PC-9 (cell line): ENCODE measurements at regions of chr14 and their contacts with region 1.

Region 1: GRCh38 chr14:55122509-55122953 is 6.5 kb upstream of the LGALS3 start:
- DNase-seq: peak; percentile 79 to 86
- H3K4me3 ChIP-seq: 0 out of 2 replicates have a peak overlapping the region, but pooled peaks have one; percentile 12
- H3K27ac ChIP-seq: peak overlapping the region; percentile 76
- H3K4me1 ChIP-seq: peaks cover 82% of the 10 kb centered on the region
- H3K27me3 ChIP-seq: no peaks in the 10 kb centered on the region
- CTCF ChIP-seq: no peak

Region 2: DNA sequence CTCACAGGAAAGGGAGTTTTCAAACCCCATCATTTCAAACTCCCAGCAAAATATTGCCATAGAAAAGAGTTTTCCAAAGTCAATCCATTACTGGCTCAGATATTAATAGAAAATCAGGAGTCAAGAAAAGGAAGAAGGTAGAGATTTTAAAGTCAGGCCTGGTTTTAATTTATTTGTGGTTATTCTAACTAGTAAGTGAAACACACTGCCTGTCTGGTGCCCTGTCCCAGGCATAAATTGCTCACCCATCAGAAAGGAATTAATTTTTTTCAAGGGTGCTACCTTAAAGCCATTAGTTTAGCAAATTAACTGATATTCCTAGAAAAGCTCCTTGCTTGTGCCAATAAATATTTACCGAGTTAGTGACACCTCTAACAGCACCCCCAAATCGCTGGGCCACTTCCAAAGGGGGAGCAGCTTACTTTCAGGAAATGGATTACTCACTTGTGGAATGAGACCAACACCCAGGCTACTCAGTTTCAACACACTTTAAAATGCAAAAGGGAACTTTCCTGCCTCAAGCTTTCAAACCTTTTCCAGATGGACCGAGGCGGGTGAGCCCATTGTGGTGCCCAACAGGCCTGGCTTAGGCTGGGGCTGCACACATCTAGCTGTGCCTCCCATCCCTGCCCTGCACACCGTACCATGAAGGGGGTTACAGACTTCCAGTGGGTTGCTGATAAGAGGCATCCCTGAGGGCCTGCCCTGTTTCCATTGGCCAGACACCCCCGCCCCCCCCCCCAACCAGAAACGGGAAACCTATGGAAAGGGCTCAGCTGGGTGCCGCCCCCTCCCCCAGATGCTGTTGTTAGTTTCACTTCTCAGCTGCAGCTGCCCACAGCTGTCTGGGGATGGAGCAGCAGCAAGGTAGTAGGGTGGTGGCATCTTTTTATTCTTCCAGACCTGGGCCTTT is 438.4 kb before region 1 on chr14:
- CTCF ChIA-PET with region 1: no interaction called
- POLR2A ChIA-PET with region 1: interaction called, 10 read pairs
- intact Hi-C with region 1: no loop called
- DNase-seq: peak; percentile 37 to 69
- H3K4me3 ChIP-seq: no peak overlapping the region
- H3K27ac ChIP-seq: peak overlapping the region; percentile 57
- H3K4me1 ChIP-seq: peaks cover 39% of the 10 kb centered on the region
- H3K27me3 ChIP-seq: no peaks in the 10 kb centered on the region
- CTCF ChIP-seq: no peak

Region 3: GRCh38 chr14:54883624-54884023 is 238.9 kb before region 1 on chr14:
- CTCF ChIA-PET with region 1: no interaction called
- POLR2A ChIA-PET with region 1: no interaction called
- intact Hi-C with region 1: no loop called
- DNase-seq: no peak
- H3K4me3 ChIP-seq: no peak overlapping the region
- H3K27ac ChIP-seq: no peak overlapping the region
- H3K4me1 ChIP-seq: no peaks in the 10 kb centered on the region
- H3K27me3 ChIP-seq: no peaks in the 10 kb centered on the region
- CTCF ChIP-seq: no peak

Region 4: DNA sequence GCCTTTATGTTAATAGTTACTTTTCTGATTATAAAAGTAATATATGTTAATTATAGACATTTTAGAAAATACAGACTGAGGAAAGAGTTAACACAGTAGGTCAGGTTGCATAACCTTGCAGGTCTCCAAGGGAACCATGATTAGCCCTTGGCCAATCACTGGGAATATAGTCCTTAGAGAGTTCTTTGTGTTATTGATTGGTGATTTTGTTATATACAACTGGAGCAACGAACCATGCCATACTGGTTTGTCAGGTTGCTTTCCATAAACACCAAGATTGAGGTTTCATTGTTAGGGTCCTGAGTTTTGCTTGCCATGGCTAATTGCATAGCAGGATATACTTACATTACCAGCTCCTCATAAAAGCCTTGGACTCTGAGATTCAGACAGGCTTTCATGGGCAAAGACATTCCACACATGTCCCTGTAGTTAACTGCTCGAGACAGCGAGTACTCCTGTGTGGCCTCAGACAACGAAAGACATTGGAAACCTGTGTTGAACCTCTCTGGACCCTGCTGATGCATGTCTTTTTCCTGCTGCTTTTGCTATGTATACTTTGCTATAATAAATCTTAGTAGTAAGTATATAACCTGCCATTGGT is 37.4 kb before region 1 on chr14:
- CTCF ChIA-PET with region 1: no interaction called
- POLR2A ChIA-PET with region 1: no interaction called
- intact Hi-C with region 1: no loop called
- DNase-seq: no peak
- H3K4me3 ChIP-seq: no peak overlapping the region
- H3K27ac ChIP-seq: no peak overlapping the region
- H3K4me1 ChIP-seq: peaks cover 17% of the 10 kb centered on the region
- H3K27me3 ChIP-seq: no peaks in the 10 kb centered on the region
- CTCF ChIP-seq: no peak

Region 5: GRCh38 chr14:55102141-55102621 is 20.4 kb before region 1 on chr14:
- CTCF ChIA-PET with region 1: interaction called, 3 read pairs
- POLR2A ChIA-PET with region 1: interaction called, 5 read pairs
- intact Hi-C with region 1: loop called (anchors 1 kb)
- DNase-seq: peak; percentile 89 to 97
- H3K4me3 ChIP-seq: peak overlapping the region; percentile 52; the same call in 1 of the 2 replicates
- H3K27ac ChIP-seq: peak overlapping the region; percentile 99
- H3K4me1 ChIP-seq: peaks cover 73% of the 10 kb centered on the region
- H3K27me3 ChIP-seq: no peaks in the 10 kb centered on the region
- CTCF ChIP-seq: no peak

Region 6: DNA sequence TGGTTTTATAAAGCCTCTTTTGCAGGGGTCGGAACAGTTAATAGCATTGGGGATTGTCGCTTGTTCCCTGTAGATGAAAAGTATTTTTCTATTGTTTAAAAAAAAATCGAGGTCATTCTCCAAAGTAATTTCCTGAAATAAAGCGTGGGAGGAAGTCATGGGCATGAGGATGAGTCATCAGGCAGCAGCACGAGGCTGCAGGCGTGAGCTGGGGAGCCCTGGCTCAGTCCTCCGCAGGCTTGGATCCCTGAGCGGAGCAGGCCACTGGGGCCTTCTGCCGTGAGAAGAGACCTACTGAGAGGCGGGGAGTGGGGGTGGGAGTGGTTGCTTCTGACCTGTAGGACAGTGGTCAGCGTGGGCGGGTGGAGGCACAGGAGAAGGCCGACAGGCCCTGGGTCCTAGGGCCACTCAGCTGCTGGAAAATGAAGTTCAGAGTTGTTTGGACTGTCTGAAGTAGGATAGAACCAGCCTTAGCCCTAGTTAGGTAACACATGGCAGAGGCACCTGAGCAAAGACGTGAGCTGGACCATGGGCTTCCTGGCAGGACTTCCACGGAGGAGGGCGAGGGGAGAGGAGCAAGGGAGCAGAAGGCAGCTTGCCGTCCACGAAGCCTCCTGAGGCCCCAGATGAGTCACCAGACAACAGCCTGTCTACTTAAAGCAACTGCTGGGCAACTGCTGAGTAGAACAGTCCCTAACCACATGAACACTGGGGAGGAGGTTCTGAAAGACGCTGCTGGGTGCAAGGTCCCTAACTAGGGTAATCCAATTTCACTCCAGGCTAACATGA is 14.6 kb before region 1 on chr14:
- CTCF ChIA-PET with region 1: interaction called, 3 read pairs
- POLR2A ChIA-PET with region 1: interaction called, 5 read pairs
- intact Hi-C with region 1: loop called (anchors 1 kb)
- DNase-seq: peak; percentile 80 to 81
- H3K4me3 ChIP-seq: no peak overlapping the region
- H3K27ac ChIP-seq: peak overlapping the region; percentile 90
- H3K4me1 ChIP-seq: peaks cover 53% of the 10 kb centered on the region
- H3K27me3 ChIP-seq: no peaks in the 10 kb centered on the region
- CTCF ChIP-seq: no peak